Heart right ventricle (tissue), 16 donors: ENCODE measurements at regions of chr17 and their contacts with region 1.

Region 1: DNA sequence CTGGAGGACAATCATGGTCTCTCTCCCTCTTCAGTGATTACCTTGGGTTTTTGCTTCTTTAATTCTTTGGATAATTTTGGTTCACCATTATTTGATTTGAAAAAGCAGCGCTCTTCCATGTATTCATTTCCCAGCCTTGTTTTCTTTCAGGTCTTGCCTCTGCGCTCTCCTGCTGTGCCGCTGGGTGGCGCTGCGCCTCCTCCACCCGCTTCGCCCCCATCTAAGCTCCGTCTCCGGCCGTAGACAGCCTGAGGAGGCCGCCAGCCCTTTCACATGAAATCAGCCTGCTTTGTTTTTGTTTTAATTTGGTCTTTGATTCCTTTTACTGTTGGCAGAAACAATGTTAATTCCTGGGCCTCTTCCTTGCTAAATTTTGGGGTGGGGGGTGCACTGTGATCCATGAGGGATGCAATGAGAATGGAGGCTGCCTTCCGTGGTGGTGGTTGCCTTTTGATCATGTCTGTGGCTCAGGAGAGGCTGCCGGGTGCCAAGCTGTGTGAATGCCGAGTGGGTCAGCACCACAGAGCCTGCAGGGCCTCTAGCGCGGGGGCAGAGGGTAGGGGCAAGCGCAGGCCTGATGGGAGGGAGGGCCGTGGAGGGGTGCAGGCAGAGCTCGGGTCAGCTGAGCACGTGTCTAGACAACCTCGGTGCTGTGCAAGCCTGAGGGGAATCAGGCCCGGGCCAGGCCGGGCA is 64.1 kb downstream of the PLD6 start:
- DNase-seq: no peak
- ATAC-seq: peak in 5 of 8 donors; percentile 38 to 55 (median 49)
- H3K4me3 ChIP-seq: no peak overlapping the region
- H3K27ac ChIP-seq: peak overlapping the region in 6 of 10 donors; percentile 0 to 60 (median 16)
- H3K4me1 ChIP-seq: peaks cover 5 to 58% (median 23%) of the 10 kb centered on the region in 9 donors
- H3K27me3 ChIP-seq: no peaks in the 10 kb centered on the region
- CTCF ChIP-seq: peak; percentile 59 to 85 (median 81)

Region 2: DNA sequence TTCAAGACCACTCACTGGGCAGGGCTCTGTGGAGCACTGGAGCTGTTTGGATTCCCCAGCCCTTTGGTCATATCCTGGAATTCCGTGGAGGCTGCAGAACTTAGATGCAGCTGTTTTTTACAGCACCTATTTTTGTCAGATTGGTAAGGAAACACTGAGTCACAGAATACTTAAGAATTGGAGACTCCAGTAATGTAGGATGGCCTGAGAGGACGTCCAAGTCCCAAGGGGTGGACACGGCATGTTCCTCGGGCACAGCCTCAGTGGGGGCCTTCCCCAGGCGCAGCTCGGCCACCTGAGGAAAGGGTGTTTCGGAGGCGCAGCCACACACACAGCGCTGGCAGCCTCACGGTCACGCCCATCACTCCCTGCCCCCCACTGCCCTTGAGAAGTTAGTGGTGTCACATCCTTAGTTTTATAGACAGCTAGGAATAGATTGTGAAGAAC is 49.4 kb after region 1 on chr17:
- intact Hi-C with region 1: loop called in 1 of 10 experiments (anchors 5 kb)
- DNase-seq: peak; percentile 62 to 64
- ATAC-seq: peak; percentile 48 to 87 (median 81)
- H3K4me3 ChIP-seq: no peak overlapping the region
- H3K27ac ChIP-seq: peak overlapping the region; percentile 11 to 88 (median 74)
- H3K4me1 ChIP-seq: peaks cover 8 to 47% (median 36%) of the 10 kb centered on the region in 9 donors
- H3K27me3 ChIP-seq: no peaks in the 10 kb centered on the region
- CTCF ChIP-seq: no peak

Region 3: DNA sequence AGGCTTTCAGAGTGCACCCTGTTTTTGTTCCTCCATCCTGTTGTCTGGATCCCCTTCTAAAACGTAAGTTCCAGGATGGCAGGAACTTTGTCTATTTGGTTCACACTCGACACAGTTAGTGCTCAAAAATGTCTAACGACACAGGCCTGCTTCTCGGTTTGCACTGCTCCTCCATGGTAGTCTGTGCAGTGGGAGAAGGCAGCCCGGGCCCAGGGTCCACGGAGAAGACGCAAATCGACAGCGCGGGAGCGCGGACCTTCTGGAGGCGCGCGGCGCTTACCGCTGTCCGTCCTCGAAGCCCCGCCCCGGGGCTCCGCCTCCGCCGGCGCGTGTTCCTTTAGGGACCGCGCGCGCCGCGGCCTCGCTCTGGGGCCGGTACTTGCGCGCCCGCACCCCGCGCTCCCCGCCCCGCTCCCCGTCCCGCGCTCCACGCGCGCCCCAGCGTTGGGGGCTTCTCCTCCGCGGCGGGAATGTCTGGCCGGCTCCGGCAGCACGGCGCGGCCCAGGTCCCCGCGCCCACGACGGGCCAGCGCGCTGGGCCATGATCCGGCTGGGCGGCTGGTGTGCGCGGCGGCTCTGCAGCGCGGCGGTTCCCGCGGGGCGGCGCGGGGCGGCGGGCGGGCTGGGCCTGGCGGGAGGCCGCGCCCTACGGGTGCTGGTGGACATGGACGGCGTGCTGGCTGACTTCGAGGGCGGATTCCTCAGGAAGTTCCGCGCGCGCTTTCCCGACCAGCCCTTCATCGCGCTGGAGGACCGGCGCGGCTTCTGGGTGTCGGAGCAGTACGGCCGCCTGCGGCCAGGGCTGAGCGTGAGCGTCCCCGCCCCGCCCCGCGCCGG is 161.2 kb after region 1 on chr17 and contains the start of gene NT5M:
- intact Hi-C with region 1: loop called in 1 of 10 experiments (anchors 10 kb)
- DNase-seq: peak; percentile 57 to 78
- ATAC-seq: peak; percentile 77 to 90 (median 87)
- H3K4me3 ChIP-seq: peak within 1 kb of the TSS; percentile 35 to 63 (median 58)
- H3K27ac ChIP-seq: peak within 1 kb of the TSS in 9 of 10 donors; percentile 29 to 74 (median 66)
- H3K4me1 ChIP-seq: peaks cover 0 to 37% (median 19%) of the 10 kb centered on the region in 9 donors
- H3K27me3 ChIP-seq: no peaks in the 10 kb centered on the region
- CTCF ChIP-seq: no peak
- total RNA-seq, gene NT5M: 7.4 to 15.8 (median 9.8) TPM